ENCODE measurements at regions of chr20 and their contacts with region 1.

Region 1: GRCh38 chr20:9689041-9689440 is 149.8 kb downstream of the PAK5 start:
- DNase-seq: no peak
- ATAC-seq: no peak
- H3K4me3 ChIP-seq: no peak overlapping the region
- H3K27ac ChIP-seq: no peak overlapping the region
- H3K4me1 ChIP-seq: no peaks in the 10 kb centered on the region
- H3K27me3 ChIP-seq: no peaks in the 10 kb centered on the region
- CTCF ChIP-seq: no peak

Region 2: GRCh38 chr20:9635750-9636149 is 53.3 kb before region 1 on chr20:
- intact Hi-C with region 1: loop called in 1 of 2 experiments (anchors 5 kb)
- DNase-seq: no peak
- ATAC-seq: no peak
- H3K4me3 ChIP-seq: no peak overlapping the region
- H3K27ac ChIP-seq: no peak overlapping the region
- H3K4me1 ChIP-seq: no peaks in the 10 kb centered on the region
- H3K27me3 ChIP-seq: no peaks in the 10 kb centered on the region
- CTCF ChIP-seq: no peak

Measured in psoas muscle (tissue), 8 donors.